Caco-2 (cell line): ENCODE measurements at regions of chr17 and their contacts with region 1.

Region 1: GRCh38 chr17:27578718-27579085 is 52.3 kb upstream of the LGALS9 start:
- DNase-seq: peak; percentile 57 to 77
- H3K4me3 ChIP-seq: no peak overlapping the region
- H3K4me3 Mint-ChIP-seq: no peak overlapping the region
- H3K27ac Mint-ChIP-seq: peak overlapping the region; percentile 89
- H3K4me1 ChIP-seq: peaks cover 68% of the 10 kb centered on the region
- H3K4me1 Mint-ChIP-seq: peaks cover 59% of the 10 kb centered on the region
- H3K27me3 ChIP-seq: no peaks in the 10 kb centered on the region
- H3K27me3 Mint-ChIP-seq: no peaks in the 10 kb centered on the region
- CTCF ChIP-seq: no peak

Region 2: DNA sequence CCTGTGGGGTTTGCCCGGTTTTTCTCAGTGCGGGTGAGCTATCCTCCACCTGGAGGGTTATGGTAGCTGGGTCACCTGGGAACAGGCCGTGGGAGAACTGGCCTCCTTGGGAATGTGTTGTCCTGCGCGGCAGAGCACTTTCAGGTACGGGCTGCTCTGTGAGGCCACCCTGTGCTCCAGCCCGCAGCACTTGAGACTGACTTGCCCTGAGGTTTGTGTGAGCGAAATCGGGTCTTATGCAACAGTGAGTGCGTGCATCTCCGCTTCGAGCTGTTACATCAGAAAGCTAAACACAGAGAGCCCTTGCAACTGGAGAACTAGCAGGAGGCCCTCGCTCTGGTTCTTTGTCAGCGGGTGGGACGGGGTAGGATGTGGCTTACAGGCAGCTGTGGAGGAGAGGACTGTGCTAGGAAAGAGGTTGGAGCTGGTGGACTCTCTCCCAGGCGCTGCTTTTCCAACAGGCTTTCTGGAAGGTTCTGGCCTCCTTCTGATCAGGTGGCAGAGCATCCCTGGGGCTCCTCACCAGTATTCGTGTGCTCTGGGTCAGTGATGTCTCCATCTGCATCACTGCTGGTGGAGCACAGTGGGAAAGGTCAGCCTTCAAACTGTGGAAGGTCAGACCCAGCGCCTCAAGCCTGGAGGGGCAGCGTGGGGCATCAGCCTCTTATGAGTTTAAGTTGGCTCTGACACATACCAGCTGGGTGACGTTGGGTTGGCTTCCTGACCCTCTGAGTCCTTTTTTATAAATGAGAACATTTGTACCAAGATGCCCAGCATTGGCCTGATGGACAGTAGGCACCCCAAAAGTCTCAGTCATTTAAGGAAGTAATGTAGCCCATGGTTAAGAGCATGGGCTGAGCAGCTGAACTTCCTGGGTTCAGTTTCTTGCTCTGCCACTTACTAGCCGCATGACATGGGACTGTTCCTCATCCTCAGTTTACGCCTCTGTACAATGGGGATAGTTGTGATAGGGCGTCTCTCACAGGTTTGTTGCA is 46.1 kb before region 1 on chr17:
- CTCF ChIA-PET with region 1: interaction called, 6 read pairs
- POLR2A ChIA-PET with region 1: no interaction called
- intact Hi-C with region 1: loop called (anchors 5 kb)
- DNase-seq: peak; percentile 78 to 85
- H3K4me3 ChIP-seq: no peak overlapping the region
- H3K4me3 Mint-ChIP-seq: peak overlapping the region; percentile 15
- H3K27ac Mint-ChIP-seq: peak overlapping the region; percentile 90
- H3K4me1 ChIP-seq: peaks cover 65% of the 10 kb centered on the region
- H3K4me1 Mint-ChIP-seq: peaks cover 75% of the 10 kb centered on the region
- H3K27me3 ChIP-seq: no peaks in the 10 kb centered on the region
- H3K27me3 Mint-ChIP-seq: no peaks in the 10 kb centered on the region
- CTCF ChIP-seq: no peak

Region 3: GRCh38 chr17:27552469-27552779 is 26.3 kb before region 1 on chr17:
- CTCF ChIA-PET with region 1: no interaction called
- POLR2A ChIA-PET with region 1: no interaction called
- intact Hi-C with region 1: loop called (anchors 2 kb)
- DNase-seq: peak; percentile 69 to 83
- H3K4me3 ChIP-seq: no peak overlapping the region
- H3K4me3 Mint-ChIP-seq: peak overlapping the region; percentile 18
- H3K27ac Mint-ChIP-seq: peak overlapping the region; percentile 86
- H3K4me1 ChIP-seq: peaks cover 47% of the 10 kb centered on the region
- H3K4me1 Mint-ChIP-seq: peaks cover 39% of the 10 kb centered on the region
- H3K27me3 ChIP-seq: no peaks in the 10 kb centered on the region
- H3K27me3 Mint-ChIP-seq: no peaks in the 10 kb centered on the region
- CTCF ChIP-seq: no peak

Region 4: GRCh38 chr17:27559506-27560481 is 18.9 kb before region 1 on chr17:
- CTCF ChIA-PET with region 1: interaction called, 5 read pairs
- POLR2A ChIA-PET with region 1: no interaction called
- intact Hi-C with region 1: loop called (anchors 1 kb)
- DNase-seq: no peak
- H3K4me3 ChIP-seq: no peak overlapping the region
- H3K4me3 Mint-ChIP-seq: no peak overlapping the region
- H3K27ac Mint-ChIP-seq: peak overlapping the region; percentile 5
- H3K4me1 ChIP-seq: peaks cover 12% of the 10 kb centered on the region
- H3K4me1 Mint-ChIP-seq: peaks cover 22% of the 10 kb centered on the region
- H3K27me3 ChIP-seq: no peaks in the 10 kb centered on the region
- H3K27me3 Mint-ChIP-seq: no peaks in the 10 kb centered on the region
- CTCF ChIP-seq: no peak

Region 5: GRCh38 chr17:27666831-27667560 is 88.3 kb after region 1 on chr17:
- CTCF ChIA-PET with region 1: no interaction called
- POLR2A ChIA-PET with region 1: no interaction called
- intact Hi-C with region 1: no loop called
- DNase-seq: peak in 1 of 2 experiments; percentile 43
- H3K4me3 ChIP-seq: no peak overlapping the region
- H3K4me3 Mint-ChIP-seq: no peak overlapping the region
- H3K27ac Mint-ChIP-seq: no peak overlapping the region
- H3K4me1 ChIP-seq: no peaks in the 10 kb centered on the region
- H3K4me1 Mint-ChIP-seq: no peaks in the 10 kb centered on the region
- H3K27me3 ChIP-seq: 0 out of 2 replicates have a peak, but pooled peaks cover 1% of the 10 kb centered on the region
- H3K27me3 Mint-ChIP-seq: peaks cover 6% of the 10 kb centered on the region
- CTCF ChIP-seq: no peak